B cell (primary cell): ENCODE measurements at regions of chr19 and their contacts with region 1.

Region 1: GRCh38 chr19:17470068-17470841 is at the start of gene SLC27A1:
- DNase-seq: peak; percentile 94
- ATAC-seq: peak; percentile 78
- H3K4me3 ChIP-seq: peak within 1 kb of the TSS; percentile 30 to 81 (median 76)
- H3K4me3 Mint-ChIP-seq: peak within 1 kb of the TSS; percentile 92
- H3K27ac ChIP-seq: peak within 1 kb of the TSS; percentile 59 to 62
- H3K27ac Mint-ChIP-seq: peak within 1 kb of the TSS; percentile 90
- H3K4me1 ChIP-seq: peaks cover 6 to 22% of the 10 kb centered on the region in 2 donors
- H3K4me1 Mint-ChIP-seq: peaks cover 28% of the 10 kb centered on the region
- H3K27me3 ChIP-seq: no peaks in the 10 kb centered on the region
- H3K27me3 Mint-ChIP-seq: no peaks in the 10 kb centered on the region
- CTCF ChIP-seq: no peak
- total RNA-seq, gene SLC27A1: 9.5 and 11.5 TPM in 2 replicates

Region 2: DNA sequence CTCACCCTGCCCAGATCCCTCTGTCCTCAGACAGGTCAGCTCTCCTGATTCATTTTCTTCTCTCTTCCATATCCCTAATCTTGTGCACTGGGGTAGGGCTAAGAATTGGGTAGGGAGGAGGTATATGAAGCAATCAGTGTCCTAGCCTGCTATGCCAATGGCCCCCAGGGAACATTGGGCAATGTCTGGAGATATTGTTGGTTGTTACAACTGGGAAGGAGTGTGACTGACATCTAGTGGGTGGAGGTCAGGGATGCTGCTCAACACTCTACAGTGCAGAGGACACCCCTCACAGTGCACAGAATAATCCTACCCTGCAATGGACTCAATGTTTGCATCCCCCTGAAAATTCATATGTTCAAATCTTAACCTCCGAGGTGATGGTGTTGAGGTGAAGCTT is 501.1 kb before region 1 on chr19:
- CTCF ChIA-PET with region 1: no interaction called
- POLR2A ChIA-PET with region 1: no interaction called
- intact Hi-C with region 1: no loop called
- DNase-seq: no peak
- ATAC-seq: no peak
- H3K4me3 ChIP-seq: no peak overlapping the region
- H3K4me3 Mint-ChIP-seq: no peak overlapping the region
- H3K27ac ChIP-seq: no peak overlapping the region
- H3K27ac Mint-ChIP-seq: no peak overlapping the region
- H3K4me1 ChIP-seq: no peaks in the 10 kb centered on the region
- H3K4me1 Mint-ChIP-seq: no peaks in the 10 kb centered on the region
- H3K27me3 ChIP-seq: no peaks in the 10 kb centered on the region
- H3K27me3 Mint-ChIP-seq: peaks cover 8% of the 10 kb centered on the region
- CTCF ChIP-seq: no peak

Region 3: GRCh38 chr19:17266975-17267788 is 203.1 kb before region 1 on chr19 and contains the start of gene BABAM1:
- CTCF ChIA-PET with region 1: no interaction called
- POLR2A ChIA-PET with region 1: no interaction called
- intact Hi-C with region 1: loop called (anchors 2 kb)
- DNase-seq: peak; percentile 98
- ATAC-seq: peak; percentile 89
- H3K4me3 ChIP-seq: peak within 1 kb of the TSS; percentile 76 to 95 (median 87)
- H3K4me3 Mint-ChIP-seq: peak within 1 kb of the TSS; percentile 84
- H3K27ac ChIP-seq: peak within 1 kb of the TSS; percentile 56 to 67
- H3K27ac Mint-ChIP-seq: peak within 1 kb of the TSS; percentile 86
- H3K4me1 ChIP-seq: peaks cover 6 to 24% of the 10 kb centered on the region in 2 donors
- H3K4me1 Mint-ChIP-seq: peaks cover 18% of the 10 kb centered on the region
- H3K27me3 ChIP-seq: no peaks in the 10 kb centered on the region
- H3K27me3 Mint-ChIP-seq: no peaks in the 10 kb centered on the region
- CTCF ChIP-seq: no peak
- total RNA-seq, gene BABAM1: 126 and 129 TPM in 2 replicates

Region 4: DNA sequence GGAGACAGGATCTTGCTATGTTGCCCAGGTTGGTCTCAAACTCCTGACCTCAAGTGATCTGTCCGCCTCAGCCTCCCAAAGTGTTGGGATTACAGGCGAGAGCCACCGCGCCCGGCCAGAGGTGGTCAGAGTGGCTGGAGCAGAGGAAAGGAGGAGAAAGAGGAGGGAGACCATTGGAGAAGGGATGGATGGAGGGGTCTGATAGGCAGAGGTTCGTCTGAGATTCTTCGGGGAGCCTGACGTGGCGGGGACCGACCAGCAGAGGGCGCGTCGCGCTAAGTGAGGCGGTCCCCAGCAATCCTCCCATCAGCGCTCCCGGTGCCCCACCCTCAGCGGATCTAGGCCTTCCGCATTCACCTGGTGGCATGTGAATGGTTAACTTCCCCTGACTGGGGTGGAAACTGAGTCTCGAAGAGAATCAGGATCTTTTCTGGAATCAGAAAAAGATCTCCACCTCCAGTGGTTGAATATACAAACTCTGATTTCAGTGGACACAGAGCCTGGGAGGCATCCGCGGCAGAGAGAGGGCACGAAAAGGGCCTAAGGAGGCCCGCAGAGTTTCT is 124.1 kb before region 1 on chr19:
- CTCF ChIA-PET with region 1: interaction called, 18 read pairs
- POLR2A ChIA-PET with region 1: no interaction called
- intact Hi-C with region 1: loop called (anchors 1 kb)
- DNase-seq: peak; percentile 84
- ATAC-seq: peak; percentile 98
- H3K4me3 ChIP-seq: no peak overlapping the region
- H3K4me3 Mint-ChIP-seq: no peak overlapping the region
- H3K27ac ChIP-seq: no peak overlapping the region
- H3K27ac Mint-ChIP-seq: no peak overlapping the region
- H3K4me1 ChIP-seq: peaks cover 5 to 6% of the 10 kb centered on the region in 2 donors
- H3K4me1 Mint-ChIP-seq: peaks cover 6% of the 10 kb centered on the region
- H3K27me3 ChIP-seq: peaks cover 0 to 32% (median 12%) of the 10 kb centered on the region in 4 experiments
- H3K27me3 Mint-ChIP-seq: peaks cover 26% of the 10 kb centered on the region
- CTCF ChIP-seq: peak; percentile 93

Region 5: GRCh38 chr19:17419621-17420466 is 50.4 kb before region 1 on chr19 and contains the start of gene MVB12A:
- CTCF ChIA-PET with region 1: interaction called, 4 read pairs
- POLR2A ChIA-PET with region 1: no interaction called
- intact Hi-C with region 1: loop called (anchors 1 kb)
- DNase-seq: peak; percentile 98
- ATAC-seq: peak; percentile 97
- H3K4me3 ChIP-seq: peak within 1 kb of the TSS; percentile 71 to 89 (median 76)
- H3K4me3 Mint-ChIP-seq: peak within 1 kb of the TSS; percentile 96
- H3K27ac ChIP-seq: peak within 1 kb of the TSS; percentile 33 to 60
- H3K27ac Mint-ChIP-seq: peak within 1 kb of the TSS; percentile 93
- H3K4me1 ChIP-seq: peaks cover 12 to 16% of the 10 kb centered on the region in 2 donors
- H3K4me1 Mint-ChIP-seq: peaks cover 15% of the 10 kb centered on the region
- H3K27me3 ChIP-seq: no peaks in the 10 kb centered on the region
- H3K27me3 Mint-ChIP-seq: no peaks in the 10 kb centered on the region
- CTCF ChIP-seq: no peak
- total RNA-seq, gene MVB12A: 26.8 and 33.6 TPM in 2 replicates

Region 6: DNA sequence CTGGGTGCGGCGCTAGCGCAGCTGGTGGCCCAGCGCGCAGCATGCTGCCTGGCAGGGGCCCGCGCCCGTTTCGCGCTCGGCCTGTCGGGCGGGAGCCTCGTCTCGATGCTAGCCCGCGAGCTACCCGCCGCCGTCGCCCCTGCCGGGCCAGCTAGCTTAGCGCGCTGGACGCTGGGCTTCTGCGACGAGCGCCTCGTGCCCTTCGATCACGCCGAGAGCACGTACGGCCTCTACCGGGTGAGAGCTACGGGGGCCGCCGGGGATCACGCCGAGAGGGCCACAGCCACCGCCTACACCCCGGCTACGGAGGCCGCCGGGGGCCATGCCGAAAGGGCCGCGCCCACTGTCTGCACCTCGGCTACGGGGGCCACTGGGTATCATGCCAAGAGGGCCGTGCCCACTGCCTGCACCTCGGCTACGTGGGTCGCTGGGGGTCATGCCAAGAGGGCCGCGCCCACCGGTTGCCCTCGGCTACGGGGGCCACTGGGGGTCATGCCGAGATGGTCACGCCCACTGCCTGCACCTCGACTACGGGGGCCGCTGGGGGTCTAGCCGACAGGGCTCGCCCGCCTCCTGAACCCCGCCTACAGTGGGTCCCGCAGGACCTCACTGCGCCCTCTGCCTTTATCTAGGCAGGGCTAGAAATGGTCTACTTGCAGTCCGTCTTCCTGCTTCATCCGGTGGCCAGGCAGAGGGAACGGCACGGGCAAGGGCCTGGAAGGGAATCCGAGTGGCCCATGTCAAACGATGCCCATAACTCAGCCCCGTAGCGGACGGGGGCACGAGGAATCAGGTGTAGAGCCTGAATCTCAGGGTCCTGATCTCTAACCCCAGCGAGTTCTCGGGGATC is 41.7 kb after region 1 on chr19:
- CTCF ChIA-PET with region 1: interaction called, 7 read pairs
- POLR2A ChIA-PET with region 1: interaction called, 4 read pairs
- intact Hi-C with region 1: loop called (anchors 1 kb)
- DNase-seq: peak; percentile 96
- ATAC-seq: peak; percentile 84
- H3K4me3 ChIP-seq: peak overlapping the region; percentile 68 to 98 (median 85)
- H3K4me3 Mint-ChIP-seq: peak overlapping the region; percentile 96
- H3K27ac ChIP-seq: peak overlapping the region; percentile 82 to 94
- H3K27ac Mint-ChIP-seq: peak overlapping the region; percentile 95
- H3K4me1 ChIP-seq: peaks cover 18 to 24% of the 10 kb centered on the region in 2 donors
- H3K4me1 Mint-ChIP-seq: peaks cover 40% of the 10 kb centered on the region
- H3K27me3 ChIP-seq: no peaks in the 10 kb centered on the region
- H3K27me3 Mint-ChIP-seq: no peaks in the 10 kb centered on the region
- CTCF ChIP-seq: peak; percentile 38

Region 7: DNA sequence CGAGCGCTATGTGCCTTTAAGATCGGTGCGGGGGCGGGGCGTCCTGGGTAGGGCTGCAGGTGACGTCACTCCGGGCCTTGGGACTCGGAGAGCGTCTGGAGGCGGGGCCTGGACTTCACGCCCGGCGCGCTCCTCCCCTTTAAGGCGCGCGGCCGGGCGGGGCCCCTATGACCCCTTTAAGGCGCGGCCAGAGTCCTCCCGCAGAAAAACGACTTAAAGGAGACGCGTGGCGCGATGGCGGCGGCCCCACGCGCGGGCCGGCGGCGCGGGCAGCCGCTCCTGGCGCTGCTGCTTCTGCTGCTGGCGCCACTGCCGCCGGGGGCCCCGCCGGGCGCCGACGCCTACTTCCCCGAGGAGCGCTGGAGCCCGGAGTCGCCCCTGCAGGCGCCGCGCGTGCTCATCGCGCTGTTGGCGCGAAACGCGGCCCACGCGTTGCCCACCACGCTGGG is 85.2 kb after region 1 on chr19 and contains the start of gene COLGALT1:
- CTCF ChIA-PET with region 1: interaction called, 7 read pairs
- POLR2A ChIA-PET with region 1: interaction called, 5 read pairs
- intact Hi-C with region 1: loop called (anchors 1 kb)
- DNase-seq: peak; percentile 99
- ATAC-seq: peak; percentile 96
- H3K4me3 ChIP-seq: peak within 1 kb of the TSS; percentile 52 to 85 (median 78)
- H3K4me3 Mint-ChIP-seq: peak within 1 kb of the TSS; percentile 86
- H3K27ac ChIP-seq: peak within 1 kb of the TSS; percentile 61 to 74
- H3K27ac Mint-ChIP-seq: peak within 1 kb of the TSS; percentile 81
- H3K4me1 ChIP-seq: peaks cover 13 to 18% of the 10 kb centered on the region in 2 donors
- H3K4me1 Mint-ChIP-seq: peaks cover 18% of the 10 kb centered on the region
- H3K27me3 ChIP-seq: no peaks in the 10 kb centered on the region
- H3K27me3 Mint-ChIP-seq: no peaks in the 10 kb centered on the region
- CTCF ChIP-seq: no peak
- total RNA-seq, gene COLGALT1: 108 and 109 TPM in 2 replicates

Region 8: DNA sequence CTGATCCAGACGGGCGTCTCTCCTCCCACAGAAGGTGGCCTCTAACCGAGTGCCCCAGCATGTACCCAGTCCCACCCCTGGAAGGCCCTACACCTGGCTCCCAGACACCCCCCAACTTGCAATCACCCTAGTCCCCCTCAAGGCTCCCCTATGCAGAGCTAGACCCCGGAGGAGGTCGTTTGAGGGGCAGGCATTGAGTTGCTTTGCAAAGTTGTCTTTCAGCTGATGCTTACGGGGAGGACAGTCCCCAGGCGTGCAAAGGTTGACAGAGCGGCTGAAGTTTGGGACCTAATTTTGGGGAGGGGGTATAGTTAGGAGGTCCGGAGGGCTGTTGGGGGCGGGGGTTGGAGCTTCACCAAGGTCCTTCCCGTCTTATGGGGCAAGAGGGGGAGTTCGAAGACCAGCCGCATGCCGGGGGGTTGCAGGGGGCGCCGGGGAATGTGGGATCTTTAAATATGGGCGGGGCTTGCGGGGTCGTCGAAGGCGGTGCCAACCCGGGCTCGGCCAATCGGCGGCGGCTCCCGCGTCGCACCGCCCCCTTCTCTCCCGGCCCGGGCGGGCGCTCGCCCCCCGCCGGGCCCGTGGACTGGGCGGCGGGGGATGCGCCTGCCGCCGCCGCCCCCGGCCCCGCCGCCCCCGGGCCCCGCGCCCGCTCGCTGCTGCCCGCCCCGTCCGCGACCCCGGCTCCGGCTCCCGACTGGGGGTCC is 496.4 kb after region 1 on chr19 and contains the start of gene KCNN1:
- CTCF ChIA-PET with region 1: no interaction called
- POLR2A ChIA-PET with region 1: no interaction called
- intact Hi-C with region 1: no loop called
- DNase-seq: no peak
- ATAC-seq: peak; percentile 24
- H3K4me3 ChIP-seq: no peak within 1 kb of the TSS
- H3K4me3 Mint-ChIP-seq: peak within 1 kb of the TSS; percentile 78
- H3K27ac ChIP-seq: no peak within 1 kb of the TSS
- H3K27ac Mint-ChIP-seq: peak within 1 kb of the TSS; percentile 20
- H3K4me1 ChIP-seq: peaks cover 4 to 10% of the 10 kb centered on the region in 2 donors
- H3K4me1 Mint-ChIP-seq: peaks cover 8% of the 10 kb centered on the region
- H3K27me3 ChIP-seq: peaks cover 0 to 42% (median 13%) of the 10 kb centered on the region in 4 experiments
- H3K27me3 Mint-ChIP-seq: peaks cover 48% of the 10 kb centered on the region
- CTCF ChIP-seq: no peak
- total RNA-seq, gene KCNN1: not detected in 2 replicates